AG04450 (cell line): ENCODE measurements at regions of chr10 and their contacts with region 1.

Region 1: GRCh38 chr10:102231357-102232318 is 5.5 kb downstream of the ELOVL3 start:
- DNase-seq: no peak
- H3K4me3 ChIP-seq: peak overlapping the region; percentile 4; the same call in 1 of the 2 replicates
- H3K27ac ChIP-seq: no peak overlapping the region
- H3K27me3 ChIP-seq: peaks cover 36% of the 10 kb centered on the region
- CTCF ChIP-seq: peak; percentile 71

Region 2: GRCh38 chr10:102200751-102201640 is 30.6 kb before region 1 on chr10:
- CTCF ChIA-PET with region 1: no interaction called
- POLR2A ChIA-PET with region 1: no interaction called
- DNase-seq: no peak
- H3K4me3 ChIP-seq: no peak overlapping the region
- H3K27ac ChIP-seq: no peak overlapping the region
- H3K27me3 ChIP-seq: peaks cover 13% of the 10 kb centered on the region
- CTCF ChIP-seq: no peak

Region 3: GRCh38 chr10:103327906-103328305 is 1096.3 kb after region 1 on chr10:
- CTCF ChIA-PET with region 1: interaction called, 10 read pairs
- POLR2A ChIA-PET with region 1: no interaction called
- DNase-seq: no peak
- H3K4me3 ChIP-seq: no peak overlapping the region
- H3K27ac ChIP-seq: no peak overlapping the region
- H3K27me3 ChIP-seq: no peaks in the 10 kb centered on the region
- CTCF ChIP-seq: no peak